ENCODE measurements at regions of chr13 and their contacts with region 1.

Region 1: DNA sequence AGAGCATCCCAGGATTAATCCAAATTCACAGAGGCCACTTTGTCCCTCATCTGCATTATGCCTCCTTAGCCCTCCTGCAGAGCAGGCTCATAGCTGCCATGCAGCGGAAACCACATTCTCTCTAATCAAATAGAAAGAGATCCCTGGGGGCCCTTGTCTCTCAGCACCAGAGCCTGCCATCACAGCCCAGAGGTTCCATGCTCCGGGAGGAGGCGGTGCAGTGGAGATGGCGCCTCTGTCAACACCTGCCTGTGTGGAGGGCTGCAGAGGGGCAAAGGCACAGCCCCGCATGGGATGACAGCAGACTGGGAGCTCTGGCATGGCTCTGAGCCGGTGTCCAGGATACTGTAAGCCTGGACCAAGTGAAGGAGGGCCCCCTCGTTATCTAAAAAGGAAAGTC is 111.3 kb downstream of the SLC7A1 start:
- DNase-seq: no peak
- CTCF ChIP-seq: no peak

Region 2: DNA sequence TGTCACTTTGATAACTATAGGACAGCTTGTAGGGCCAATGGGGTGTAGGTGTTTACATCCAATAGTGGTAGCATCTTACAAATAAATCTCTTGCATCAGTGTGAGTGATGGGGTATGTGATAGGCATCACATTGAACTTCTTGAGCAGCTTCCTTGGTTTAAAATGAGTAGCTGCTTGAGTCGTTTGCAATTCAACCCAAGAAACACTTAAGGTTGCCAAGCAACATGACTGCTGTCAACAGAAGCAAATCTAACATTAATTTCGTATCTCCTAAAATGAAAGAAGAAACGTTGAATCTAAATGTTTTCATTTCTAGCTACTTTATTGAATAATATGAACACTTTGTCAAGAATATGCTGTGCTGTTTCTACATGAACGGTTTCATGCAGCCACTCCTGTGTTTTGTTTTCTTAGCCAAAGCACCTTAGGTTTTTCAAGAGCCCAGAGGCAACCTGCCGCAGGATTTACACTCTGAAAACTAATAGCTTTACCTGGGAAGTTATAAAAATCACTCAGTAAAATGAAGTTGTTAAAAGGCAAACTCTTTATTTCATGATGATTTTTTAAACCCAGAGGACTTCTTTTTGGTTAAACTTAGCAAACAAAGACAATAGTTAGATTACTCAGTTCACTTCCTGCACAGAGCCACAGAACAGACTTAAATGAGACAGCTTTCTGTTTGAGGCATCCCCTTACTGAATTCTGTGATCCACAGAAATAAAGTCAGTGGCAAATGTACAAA is 358.9 kb before region 1 on chr13:
- CTCF ChIA-PET with region 1: no interaction called
- POLR2A ChIA-PET with region 1: no interaction called
- DNase-seq: peak; percentile 30
- CTCF ChIP-seq: no peak

Region 3: DNA sequence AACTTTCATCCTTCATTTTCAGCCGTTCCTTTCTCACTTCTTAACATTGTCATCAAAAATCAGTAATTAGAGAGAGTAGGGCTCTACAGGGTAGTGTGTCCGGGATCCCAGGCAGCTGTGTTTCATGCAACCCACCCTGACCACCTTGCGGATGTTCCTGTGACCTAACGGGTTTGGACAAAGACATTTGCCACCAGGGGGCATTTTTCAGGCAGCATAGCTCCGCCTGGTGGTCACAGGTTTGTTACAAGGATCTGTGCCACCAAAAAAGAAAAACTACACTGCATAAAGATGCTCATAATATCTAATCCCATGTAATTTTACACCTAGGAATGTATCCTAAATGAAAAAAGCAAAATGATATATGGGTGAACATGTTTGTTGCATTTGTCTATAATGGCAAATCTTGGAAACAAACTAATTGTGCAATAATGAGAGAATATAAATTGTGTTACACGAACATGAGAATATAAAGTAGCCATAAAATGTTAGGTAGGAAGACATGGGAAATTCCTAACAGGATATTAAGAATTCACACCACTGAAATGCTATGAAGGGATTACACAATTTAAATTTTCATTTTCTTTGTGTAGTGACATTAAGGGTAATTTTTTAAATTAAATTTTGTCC is 11.8 kb before region 1 on chr13:
- CTCF ChIA-PET with region 1: interaction called, 19 read pairs
- POLR2A ChIA-PET with region 1: no interaction called
- DNase-seq: peak; percentile 61
- CTCF ChIP-seq: peak; percentile 94